ENCODE measurements at regions of chr4 and their contacts with region 1.

Region 1: DNA sequence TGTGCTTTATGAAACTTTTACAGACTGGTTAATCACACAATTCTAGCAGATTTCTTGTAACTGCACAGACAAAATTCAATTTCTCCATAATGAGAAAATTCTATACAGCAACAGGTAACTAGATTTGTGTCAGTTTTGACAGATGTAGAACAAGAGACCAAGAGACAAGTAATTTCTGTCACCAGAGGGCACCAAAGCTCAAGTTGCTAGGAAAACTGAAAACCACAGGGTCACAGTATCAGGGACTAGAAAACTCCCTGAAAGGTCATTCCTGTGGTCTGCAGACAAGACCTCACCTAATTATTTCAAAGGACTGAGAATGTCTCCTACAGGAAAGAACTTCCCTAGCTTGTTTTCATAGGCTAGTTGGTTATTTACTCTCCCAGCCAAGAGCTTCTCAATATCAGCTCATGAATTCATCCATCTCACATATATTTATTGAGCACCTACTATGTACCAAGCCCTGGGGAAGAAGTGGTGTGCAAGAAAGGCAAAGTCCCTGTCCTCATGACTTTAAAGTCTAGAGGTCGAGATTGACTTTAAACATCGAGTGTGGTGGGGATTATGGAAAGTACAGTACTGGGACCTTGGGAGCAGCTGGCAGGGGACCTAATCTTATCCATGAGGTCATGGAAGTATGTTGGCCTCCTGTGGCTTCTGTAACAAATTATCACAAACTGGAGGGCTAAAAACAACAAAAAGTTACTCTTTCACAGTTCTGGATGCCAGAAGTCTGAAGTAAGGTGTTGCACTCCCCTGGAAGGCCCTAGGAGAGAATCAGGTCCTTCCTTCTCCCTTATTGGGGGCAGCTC is 47.8 kb upstream of the SETD7 start:
- DNase-seq: no peak
- H3K4me3 ChIP-seq: no peak overlapping the region
- CTCF ChIP-seq: peak; percentile 38

Region 2: GRCh38 chr4:139556071-139556746 is 47.6 kb before region 1 on chr4 and contains the start of gene SETD7:
- CTCF ChIA-PET with region 1: interaction called, 14 read pairs
- POLR2A ChIA-PET with region 1: interaction called, 3 read pairs
- DNase-seq: no peak
- H3K4me3 ChIP-seq: peak within 1 kb of the TSS; percentile 90
- CTCF ChIP-seq: no peak

Region 3: DNA sequence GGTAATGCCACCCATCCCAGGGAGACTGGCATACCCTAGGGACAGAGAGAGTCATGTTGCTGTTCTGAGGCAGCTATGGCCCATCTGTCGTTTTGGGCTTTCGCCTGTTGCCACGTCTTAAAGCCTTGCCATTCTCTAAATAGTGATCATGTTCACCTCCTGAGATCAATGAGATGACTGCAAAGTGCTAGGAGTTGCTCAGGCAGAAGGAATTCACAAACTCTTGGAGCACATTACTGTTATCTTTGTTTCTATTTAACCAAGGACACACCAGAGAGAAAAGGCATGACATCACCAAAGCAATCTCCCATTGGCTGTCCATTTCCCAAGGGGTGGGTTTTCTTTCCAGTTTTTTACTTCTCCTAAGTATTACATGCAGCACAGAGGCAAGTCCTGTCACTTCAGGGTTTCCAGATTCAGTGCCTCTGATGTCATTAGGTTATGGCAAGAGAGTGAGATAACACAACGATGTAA is 10.7 kb before region 1 on chr4:
- CTCF ChIA-PET with region 1: interaction called, 80 read pairs
- POLR2A ChIA-PET with region 1: no interaction called
- DNase-seq: peak; percentile 74
- H3K4me3 ChIP-seq: no peak overlapping the region
- CTCF ChIP-seq: no peak

Region 4: GRCh38 chr4:139628184-139629012 is 24.6 kb after region 1 on chr4:
- CTCF ChIA-PET with region 1: interaction called, 66 read pairs
- POLR2A ChIA-PET with region 1: no interaction called
- DNase-seq: no peak
- H3K4me3 ChIP-seq: no peak overlapping the region
- CTCF ChIP-seq: no peak

Region 5: DNA sequence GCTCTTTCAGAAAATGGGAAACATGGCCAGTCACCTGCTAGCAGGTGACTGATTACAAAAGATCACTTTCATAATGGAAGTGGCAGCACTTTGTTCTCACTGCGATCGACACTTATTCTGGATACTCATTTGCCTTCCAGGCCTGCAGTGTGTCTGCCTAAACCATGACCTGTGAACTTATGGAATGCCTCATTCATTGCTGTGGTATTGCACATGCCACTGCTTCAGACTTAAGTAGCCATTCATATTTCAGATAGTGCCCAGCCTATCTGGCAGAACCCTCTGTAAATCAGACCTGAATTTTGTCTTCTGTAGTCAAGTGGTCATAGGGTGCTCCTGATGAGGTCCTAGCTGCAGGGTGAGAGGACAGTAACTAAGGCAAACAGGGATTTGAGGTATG is 38.6 kb after region 1 on chr4:
- CTCF ChIA-PET with region 1: interaction called, 554 read pairs
- POLR2A ChIA-PET with region 1: no interaction called
- DNase-seq: peak; percentile 51
- H3K4me3 ChIP-seq: no peak overlapping the region
- CTCF ChIP-seq: no peak

Region 6: GRCh38 chr4:139794158-139794954 is 190.6 kb after region 1 on chr4:
- CTCF ChIA-PET with region 1: no interaction called
- POLR2A ChIA-PET with region 1: no interaction called
- DNase-seq: no peak
- H3K4me3 ChIP-seq: no peak overlapping the region
- CTCF ChIP-seq: no peak

Measured in AG04449 (cell line).